Motor neuron (in vitro differentiated cells): ENCODE measurements at regions of chr17 and their contacts with region 1.

Region 1: GRCh38 chr17:42937712-42938596 is 26.3 kb downstream of the AARSD1 start:
- ATAC-seq: peak; percentile 66 to 97 (median 80)
- H3K4me3 ChIP-seq: no peak overlapping the region
- H3K27ac ChIP-seq: no peak overlapping the region
- H3K4me1 ChIP-seq: no peaks in the 10 kb centered on the region

Region 2: GRCh38 chr17:42405963-42406495 is 531.9 kb before region 1 on chr17:
- in situ Hi-C with region 1: no loop called
- ATAC-seq: peak; percentile 22 to 78 (median 66)
- H3K4me3 ChIP-seq: no peak overlapping the region
- H3K27ac ChIP-seq: no peak overlapping the region
- H3K4me1 ChIP-seq: peaks cover 4 to 9% of the 10 kb centered on the region in 2 donors

Region 3: DNA sequence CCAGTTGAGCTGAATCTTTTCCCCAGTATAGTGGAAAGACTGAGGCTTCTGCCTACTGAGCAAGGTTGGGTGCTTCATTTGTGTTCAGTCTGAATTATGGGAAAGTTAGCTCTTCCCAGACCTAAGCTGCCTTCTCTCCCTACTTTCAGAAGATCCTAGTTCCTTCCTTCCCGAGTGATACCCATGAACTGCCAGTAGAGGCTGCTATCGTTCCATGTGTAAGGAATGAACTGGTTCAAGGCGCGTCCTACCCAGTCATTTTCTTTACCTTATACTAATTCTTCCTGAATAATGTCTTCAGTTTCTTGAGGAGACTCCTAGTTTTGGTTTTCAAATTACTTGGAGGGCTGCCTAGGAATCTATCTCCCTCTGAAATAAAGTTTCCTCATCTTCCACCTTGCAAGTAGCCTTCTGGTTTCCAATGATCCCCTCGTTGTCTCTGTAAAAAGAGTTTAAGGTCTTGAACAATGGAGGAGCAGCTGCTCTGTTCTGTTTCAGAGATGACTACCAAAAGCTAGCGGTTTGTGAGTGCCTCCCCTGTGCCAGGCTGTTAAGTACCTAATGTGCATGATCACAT is 94.5 kb before region 1 on chr17:
- in situ Hi-C with region 1: loop called in 4 of 9 experiments (anchors 10 to 25 kb)
- ATAC-seq: peak; percentile 6 to 87 (median 70)
- H3K4me3 ChIP-seq: no peak overlapping the region
- H3K27ac ChIP-seq: no peak overlapping the region
- H3K4me1 ChIP-seq: no peaks in the 10 kb centered on the region

Region 4: DNA sequence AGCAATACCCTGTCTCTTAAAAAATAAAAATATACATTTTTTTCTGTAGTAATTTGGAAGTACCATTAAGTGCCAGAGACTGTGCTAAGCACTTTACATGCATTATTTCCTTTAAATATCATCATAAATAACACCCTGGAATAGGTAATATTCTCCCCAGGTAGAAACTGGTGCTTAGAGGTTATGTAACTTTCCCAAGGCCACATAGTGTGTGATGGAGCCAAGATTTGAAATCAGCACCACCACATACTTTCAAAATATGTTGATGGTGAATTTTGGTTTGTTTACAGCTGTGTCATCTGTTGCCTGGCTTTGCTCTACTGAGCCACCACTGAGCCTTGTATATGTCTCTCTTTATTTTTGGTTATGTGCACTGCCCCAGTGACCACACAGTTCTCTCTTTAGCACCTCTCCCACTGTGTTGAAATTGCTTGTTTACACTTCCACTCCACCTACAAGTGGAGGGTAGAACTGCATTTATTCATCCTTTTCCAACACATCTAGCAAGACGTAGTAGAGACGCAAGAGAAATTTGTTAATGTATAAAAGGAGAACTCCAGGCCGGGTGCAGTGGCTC is 214.0 kb after region 1 on chr17:
- in situ Hi-C with region 1: no loop called
- ATAC-seq: no peak
- H3K4me3 ChIP-seq: no peak overlapping the region
- H3K27ac ChIP-seq: no peak overlapping the region
- H3K4me1 ChIP-seq: no peaks in the 10 kb centered on the region